Posterior cingulate gyrus (tissue), 11 donors: ENCODE measurements at regions of chr19 and their contacts with region 1.

Region 1: GRCh38 chr19:2315818-2316353 is 7.9 kb upstream of the LINGO3 start:
- DNase-seq: peak in 9 of 10 donors; percentile 54 to 95 (median 74)

Region 2: GRCh38 chr19:2236314-2237050 is 79.4 kb before region 1 on chr19 and contains the starts of genes PLEKHJ1 and SF3A2:
- intact Hi-C with region 1: loop called (anchors 1 kb)
- DNase-seq: peak; percentile 92 to 99 (median 94)

Region 3: GRCh38 chr19:2274931-2275535 is 40.9 kb before region 1 on chr19:
- intact Hi-C with region 1: loop called (anchors 5 kb)
- DNase-seq: peak in 9 of 10 donors; percentile 60 to 95 (median 76)

Region 4: DNA sequence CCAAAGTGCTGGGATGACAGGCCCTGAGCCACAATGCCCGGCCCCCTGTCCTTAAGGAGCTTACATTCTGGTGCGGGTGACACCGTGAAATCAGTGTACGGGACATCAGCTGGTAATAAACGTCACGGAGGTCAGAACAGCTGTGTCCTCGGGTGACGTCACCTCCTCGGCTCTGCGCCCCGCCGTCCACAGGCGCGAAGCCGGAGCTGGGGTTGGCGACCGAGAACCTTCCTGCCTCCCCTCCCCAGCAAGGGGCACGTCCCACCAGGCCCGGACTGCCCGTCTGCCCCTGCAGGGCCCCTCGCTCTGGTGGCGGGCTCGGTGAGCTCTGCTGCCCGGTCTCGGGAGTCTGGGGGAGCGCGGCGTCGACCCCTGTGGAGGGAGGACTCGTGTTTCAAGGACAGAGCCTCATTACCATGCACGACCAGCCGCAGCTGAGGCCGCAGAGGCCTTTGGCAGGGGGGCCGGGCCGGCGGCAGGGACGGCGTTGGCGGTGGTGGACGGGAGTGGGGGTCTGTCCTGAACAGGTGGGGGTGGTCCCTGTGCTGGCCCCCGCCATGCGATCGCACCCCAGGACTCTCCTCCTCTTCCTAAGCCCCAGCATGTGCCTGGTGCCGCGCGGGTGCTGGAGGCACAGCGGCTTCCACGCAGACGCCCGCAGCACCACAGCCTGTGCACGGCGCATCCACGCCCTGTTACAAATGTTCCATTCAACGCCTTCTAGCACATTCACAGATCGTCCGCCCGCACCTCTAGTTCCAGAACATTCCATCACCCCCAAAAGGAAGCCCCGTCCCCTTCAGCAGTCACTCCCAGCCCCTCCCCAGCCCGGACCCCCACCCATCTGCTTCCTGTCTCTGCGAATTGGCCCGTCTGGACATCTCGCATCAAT is 13.3 kb before region 1 on chr19:
- intact Hi-C with region 1: no loop called
- DNase-seq: peak in 1 of 10 donors; percentile 27